HAP-1 (cell line): ENCODE measurements at regions of chr14 and their contacts with region 1.

Region 1: DNA sequence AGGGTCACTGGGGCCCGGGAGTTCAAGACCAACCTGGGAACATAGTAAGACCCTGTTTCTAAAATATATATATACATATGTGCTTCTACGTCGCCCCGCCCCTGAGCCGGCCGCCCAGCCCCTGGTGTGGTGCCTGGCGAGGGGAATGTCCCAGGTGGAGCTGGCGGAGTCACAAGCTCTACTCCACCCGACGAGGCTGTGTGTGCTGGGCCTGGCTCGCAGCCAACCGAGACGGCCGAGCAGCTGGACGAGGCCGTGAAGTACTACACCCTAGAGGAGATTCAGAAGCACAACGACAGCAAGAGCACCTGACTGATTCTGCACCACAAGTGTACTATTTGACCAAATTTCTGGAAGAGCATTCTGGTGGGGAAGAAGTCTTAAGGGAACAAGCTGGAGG is 22.1 kb upstream of the ITPK1 start:
- DNase-seq: peak in 1 of 2 experiments; percentile 25
- H3K4me3 ChIP-seq: no peak overlapping the region
- H3K4me1 ChIP-seq: no peaks in the 10 kb centered on the region
- H3K27me3 ChIP-seq: no peaks in the 10 kb centered on the region

Region 2: DNA sequence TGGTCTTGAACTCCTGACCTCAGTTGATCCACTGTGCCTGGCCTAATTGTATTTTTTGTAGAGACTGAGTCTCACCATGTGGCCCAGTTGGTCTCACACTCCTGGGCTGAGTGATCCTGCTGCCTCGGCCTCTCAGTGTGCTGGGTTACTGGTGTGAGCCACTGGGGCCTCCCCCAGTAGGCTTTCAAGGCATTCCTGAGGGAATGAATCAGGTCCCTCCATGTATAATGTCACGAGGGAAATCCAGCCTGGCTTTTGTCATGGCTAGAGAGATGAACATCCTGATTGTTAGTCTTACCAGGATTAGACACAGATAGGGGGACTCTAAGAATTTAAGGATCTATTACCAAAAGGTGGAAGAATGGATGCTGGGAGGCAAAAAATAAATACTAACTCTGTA is 964.2 kb before region 1 on chr14:
- in situ Hi-C with region 1: no loop called
- DNase-seq: no peak
- H3K4me3 ChIP-seq: no peak overlapping the region
- H3K4me1 ChIP-seq: peaks cover 6% of the 10 kb centered on the region; the same call in 1 of the 2 replicates
- H3K27me3 ChIP-seq: no peaks in the 10 kb centered on the region

Region 3: GRCh38 chr14:92944976-92945375 is 192.9 kb before region 1 on chr14:
- in situ Hi-C with region 1: loop called (anchors 5 kb)
- DNase-seq: no peak
- H3K4me3 ChIP-seq: no peak overlapping the region
- H3K4me1 ChIP-seq: no peaks in the 10 kb centered on the region
- H3K27me3 ChIP-seq: no peaks in the 10 kb centered on the region